Calu3 (cell line): ENCODE measurements at regions of chr9 and their contacts with region 1.

Region 1: GRCh38 chr9:99807276-99807852 is 14.3 kb upstream of the NR4A3 start:
- DNase-seq: peak; percentile 67
- H3K4me3 Mint-ChIP-seq: no peak overlapping the region
- H3K27ac Mint-ChIP-seq: no peak overlapping the region
- H3K4me1 Mint-ChIP-seq: peaks cover 17% of the 10 kb centered on the region
- H3K27me3 Mint-ChIP-seq: no peaks in the 10 kb centered on the region
- CTCF ChIP-seq: peak; percentile 66

Region 2: GRCh38 chr9:99266255-99267023 is 540.9 kb before region 1 on chr9:
- CTCF ChIA-PET with region 1: no interaction called
- intact Hi-C with region 1: loop called (anchors 10 kb)
- DNase-seq: peak; percentile 62
- H3K4me3 Mint-ChIP-seq: no peak overlapping the region
- H3K27ac Mint-ChIP-seq: no peak overlapping the region
- H3K4me1 Mint-ChIP-seq: peaks cover 13% of the 10 kb centered on the region
- H3K27me3 Mint-ChIP-seq: no peaks in the 10 kb centered on the region
- CTCF ChIP-seq: peak; percentile 57

Region 3: GRCh38 chr9:99299211-99300102 is 507.9 kb before region 1 on chr9:
- CTCF ChIA-PET with region 1: no interaction called
- intact Hi-C with region 1: loop called (anchors 5 kb)
- DNase-seq: peak; percentile 5
- H3K4me3 Mint-ChIP-seq: no peak overlapping the region
- H3K27ac Mint-ChIP-seq: no peak overlapping the region
- H3K4me1 Mint-ChIP-seq: no peaks in the 10 kb centered on the region
- H3K27me3 Mint-ChIP-seq: peaks cover 24% of the 10 kb centered on the region
- CTCF ChIP-seq: no peak

Region 4: GRCh38 chr9:99840072-99840471 is 32.7 kb after region 1 on chr9:
- CTCF ChIA-PET with region 1: no interaction called
- intact Hi-C with region 1: no loop called
- DNase-seq: no peak
- H3K4me3 Mint-ChIP-seq: no peak overlapping the region
- H3K27ac Mint-ChIP-seq: no peak overlapping the region
- H3K4me1 Mint-ChIP-seq: no peaks in the 10 kb centered on the region
- H3K27me3 Mint-ChIP-seq: no peaks in the 10 kb centered on the region
- CTCF ChIP-seq: no peak

Region 5: DNA sequence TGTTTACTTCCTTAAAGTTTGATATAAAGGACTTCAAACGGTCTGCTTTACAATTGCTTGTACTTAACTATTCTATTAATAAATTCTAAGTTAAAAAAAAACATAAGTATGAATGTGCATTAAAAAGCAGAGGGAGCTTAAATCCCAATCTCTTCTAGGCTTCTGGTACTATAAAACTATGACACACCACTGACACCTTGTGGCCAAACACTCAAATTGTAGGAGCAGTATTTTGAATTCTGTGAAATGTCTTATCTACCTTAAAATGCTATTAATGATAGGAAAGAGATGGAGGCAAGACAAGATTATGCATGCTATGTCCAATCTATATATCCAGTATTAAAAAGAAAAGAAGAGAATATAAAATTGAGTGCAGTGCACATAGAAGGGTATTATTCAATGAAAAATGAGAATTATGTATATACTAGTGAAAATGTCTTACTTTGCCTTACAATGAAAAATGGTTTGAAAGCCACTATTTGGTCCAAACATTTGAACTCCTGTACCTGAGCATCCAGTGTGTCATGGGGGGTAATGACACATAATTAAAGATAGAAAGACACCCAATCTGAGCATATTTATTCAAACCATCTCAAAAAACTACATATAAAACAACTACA is 203.8 kb after region 1 on chr9:
- CTCF ChIA-PET with region 1: no interaction called
- intact Hi-C with region 1: loop called (anchors 5 kb)
- DNase-seq: peak; percentile 13
- H3K4me3 Mint-ChIP-seq: no peak overlapping the region
- H3K27ac Mint-ChIP-seq: no peak overlapping the region
- H3K4me1 Mint-ChIP-seq: no peaks in the 10 kb centered on the region
- H3K27me3 Mint-ChIP-seq: no peaks in the 10 kb centered on the region
- CTCF ChIP-seq: peak; percentile 14

Region 6: DNA sequence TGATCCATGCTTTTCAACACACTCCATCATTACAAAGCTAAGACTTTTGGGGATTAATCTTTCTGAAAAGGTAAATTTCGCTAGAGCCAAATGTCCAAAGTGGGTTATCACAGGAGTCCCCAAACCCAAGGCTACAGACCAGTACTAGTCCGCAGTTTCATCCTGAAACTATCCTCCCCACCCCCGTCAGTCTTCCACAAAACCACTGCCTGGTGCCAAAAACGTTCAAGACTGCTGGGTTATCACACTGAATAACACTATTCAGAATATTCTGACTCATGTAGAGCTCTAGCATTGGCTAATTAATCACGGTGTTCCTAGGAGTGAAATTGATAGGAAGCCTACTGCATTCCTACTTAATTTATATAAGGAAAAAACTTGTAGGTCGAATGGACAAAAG is 266.7 kb after region 1 on chr9:
- CTCF ChIA-PET with region 1: no interaction called
- intact Hi-C with region 1: no loop called
- DNase-seq: no peak
- H3K4me3 Mint-ChIP-seq: no peak overlapping the region
- H3K27ac Mint-ChIP-seq: no peak overlapping the region
- H3K4me1 Mint-ChIP-seq: no peaks in the 10 kb centered on the region
- H3K27me3 Mint-ChIP-seq: no peaks in the 10 kb centered on the region
- CTCF ChIP-seq: no peak

Region 7: DNA sequence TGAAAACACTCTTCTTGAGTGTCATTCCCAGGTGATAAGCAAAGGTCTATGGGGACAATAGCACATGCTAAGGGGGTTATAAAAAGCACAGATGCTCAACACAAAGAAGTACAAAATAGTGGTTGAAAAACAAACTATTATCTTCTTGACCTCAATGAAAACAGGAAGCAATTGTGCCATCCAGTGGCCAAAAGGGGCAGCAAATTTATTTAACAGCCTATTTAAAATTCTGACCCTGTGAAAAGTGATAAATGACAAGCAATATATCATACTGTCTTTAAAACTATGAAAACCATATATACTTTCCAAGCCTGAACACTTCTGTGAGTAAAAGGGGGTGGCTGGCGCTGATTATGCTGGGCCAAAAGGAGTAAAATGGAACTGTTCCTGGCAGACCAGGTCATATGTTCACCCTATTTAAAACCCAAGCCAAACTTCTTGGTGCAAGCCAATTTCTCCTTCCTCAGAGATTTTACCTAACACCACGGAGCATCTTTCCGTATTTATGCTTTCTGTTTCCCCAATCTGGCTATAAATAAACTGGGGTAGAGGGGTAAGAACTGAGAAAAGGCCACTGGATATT is 515.7 kb after region 1 on chr9:
- CTCF ChIA-PET with region 1: no interaction called
- intact Hi-C with region 1: loop called (anchors 10 kb)
- DNase-seq: peak; percentile 2
- H3K4me3 Mint-ChIP-seq: no peak overlapping the region
- H3K27ac Mint-ChIP-seq: no peak overlapping the region
- H3K4me1 Mint-ChIP-seq: no peaks in the 10 kb centered on the region
- H3K27me3 Mint-ChIP-seq: no peaks in the 10 kb centered on the region
- CTCF ChIP-seq: peak; percentile 16